ENCODE measurements at regions of chr14 and their contacts with region 1.

Region 1: GRCh38 chr14:23567192-23568020 is at the start of gene AP1G2:
- DNase-seq: peak; percentile 78
- ATAC-seq: peak; percentile 70
- H3K4me3 ChIP-seq: peak within 1 kb of the TSS; percentile 81
- H3K27ac ChIP-seq: peak within 1 kb of the TSS; percentile 45
- H3K4me1 ChIP-seq: peaks cover 20% of the 10 kb centered on the region
- H3K27me3 ChIP-seq: no peaks in the 10 kb centered on the region
- CTCF ChIP-seq: no peak
- total RNA-seq, gene AP1G2: 69.7 and 71.7 TPM in 2 replicates

Region 2: DNA sequence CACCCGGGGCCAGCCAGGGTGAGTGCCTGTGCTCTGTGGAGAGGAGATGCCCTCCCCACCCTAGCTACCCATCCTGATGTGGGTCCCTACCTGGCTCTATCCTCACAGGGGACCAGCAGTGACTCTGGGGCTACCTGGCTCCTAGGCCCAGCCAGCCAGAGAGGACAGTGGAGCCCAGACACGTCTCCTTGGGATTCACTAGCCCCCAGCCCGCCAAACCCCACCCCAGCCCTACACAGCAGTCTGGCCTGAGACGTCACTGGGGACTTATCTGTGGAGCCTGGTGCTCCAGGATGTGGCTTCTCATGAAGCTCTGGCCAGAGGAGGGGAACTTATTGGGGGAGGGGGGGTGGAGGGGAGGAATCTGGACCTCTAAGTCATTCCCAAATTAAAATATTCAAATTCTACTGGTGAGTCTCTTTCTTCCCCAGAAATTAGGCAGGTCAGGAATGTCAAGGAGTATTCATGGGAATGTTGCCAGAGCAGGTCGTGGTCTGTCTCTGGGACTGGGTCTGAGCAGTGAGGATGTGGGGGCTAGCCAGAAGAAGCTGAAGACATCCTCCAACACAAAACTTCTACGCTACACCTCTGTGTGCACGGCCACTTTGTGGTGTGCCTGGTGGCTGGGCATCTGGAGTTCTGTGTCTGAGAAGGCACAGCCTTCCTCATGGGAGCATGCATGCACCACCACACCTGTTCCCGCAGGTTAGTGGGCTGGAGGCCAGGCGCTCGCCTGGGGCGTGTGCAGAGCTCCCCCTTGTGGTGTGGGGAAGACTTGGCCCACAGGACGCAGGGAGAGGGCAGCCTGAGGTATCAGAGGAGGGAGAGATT is 187.8 kb before region 1 on chr14:
- CTCF ChIA-PET with region 1: interaction called, 11 read pairs
- POLR2A ChIA-PET with region 1: no interaction called
- intact Hi-C with region 1: no loop called
- DNase-seq: peak; percentile 81
- ATAC-seq: peak; percentile 91
- H3K4me3 ChIP-seq: no peak overlapping the region
- H3K27ac ChIP-seq: no peak overlapping the region
- H3K4me1 ChIP-seq: no peaks in the 10 kb centered on the region
- H3K27me3 ChIP-seq: peaks cover 27% of the 10 kb centered on the region
- CTCF ChIP-seq: peak; percentile 94

Region 3: DNA sequence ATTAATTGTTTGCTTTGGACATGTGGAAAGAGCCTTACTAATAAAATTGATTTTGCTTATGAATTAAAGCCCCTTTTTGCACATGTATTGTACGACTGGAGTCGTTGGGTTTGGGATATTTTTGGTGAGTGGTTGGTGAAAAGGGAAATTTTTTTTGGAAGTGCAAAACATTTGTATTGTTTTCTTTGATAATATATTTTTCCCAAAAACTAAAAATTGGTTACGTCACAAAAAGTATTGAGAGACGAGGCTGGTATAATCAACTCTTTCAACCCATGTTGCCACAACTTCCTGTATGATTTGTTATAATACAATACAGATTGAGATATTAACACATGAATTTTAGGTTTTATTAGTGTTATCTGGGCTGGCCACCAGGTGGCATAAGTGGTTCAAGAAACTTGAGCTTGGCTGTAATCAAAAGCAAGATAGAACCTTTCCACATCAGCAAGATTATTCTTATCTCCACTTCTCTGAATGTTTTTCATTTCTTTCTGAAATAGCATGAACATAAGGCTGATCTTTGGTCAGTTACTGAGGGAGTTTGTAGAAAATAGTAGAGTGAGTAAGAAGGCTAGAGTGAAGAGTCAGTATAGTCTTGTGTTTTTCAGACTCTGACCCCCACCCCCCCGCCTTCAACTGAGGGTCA is 89.2 kb before region 1 on chr14:
- CTCF ChIA-PET with region 1: no interaction called
- POLR2A ChIA-PET with region 1: no interaction called
- intact Hi-C with region 1: loop called (anchors 1 kb)
- DNase-seq: peak; percentile 73
- ATAC-seq: peak; percentile 50
- H3K4me3 ChIP-seq: no peak overlapping the region
- H3K27ac ChIP-seq: no peak overlapping the region
- H3K4me1 ChIP-seq: no peaks in the 10 kb centered on the region
- H3K27me3 ChIP-seq: no peaks in the 10 kb centered on the region
- CTCF ChIP-seq: peak; percentile 83